ENCODE measurements at regions of chr3 and their contacts with region 1.

Region 1: DNA sequence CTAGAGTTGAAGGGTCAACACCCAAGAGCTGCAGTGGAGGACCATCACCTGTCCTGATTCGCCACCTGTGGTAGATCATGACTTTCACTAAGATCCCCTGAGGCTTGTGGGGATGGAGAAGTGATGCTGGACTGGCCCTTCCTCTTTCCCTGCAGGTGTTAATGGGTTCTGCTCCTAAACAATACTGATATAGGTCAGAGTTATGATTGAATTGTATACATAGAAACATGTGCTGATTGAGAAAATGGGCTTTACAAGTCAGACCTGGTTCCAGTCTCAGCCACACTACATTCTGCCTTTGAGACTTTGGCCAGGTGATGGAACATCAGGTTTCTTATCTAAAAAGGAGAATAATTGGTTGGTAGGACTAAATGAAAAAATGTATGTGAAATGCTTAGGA is 418.9 kb upstream of the TPRG1 start:
- DNase-seq: no peak
- H3K4me3 Mint-ChIP-seq: no peak overlapping the region
- H3K27ac Mint-ChIP-seq: peak overlapping the region; percentile 60
- H3K4me1 Mint-ChIP-seq: peaks cover 33% of the 10 kb centered on the region
- H3K27me3 Mint-ChIP-seq: peaks cover 2% of the 10 kb centered on the region

Region 2: DNA sequence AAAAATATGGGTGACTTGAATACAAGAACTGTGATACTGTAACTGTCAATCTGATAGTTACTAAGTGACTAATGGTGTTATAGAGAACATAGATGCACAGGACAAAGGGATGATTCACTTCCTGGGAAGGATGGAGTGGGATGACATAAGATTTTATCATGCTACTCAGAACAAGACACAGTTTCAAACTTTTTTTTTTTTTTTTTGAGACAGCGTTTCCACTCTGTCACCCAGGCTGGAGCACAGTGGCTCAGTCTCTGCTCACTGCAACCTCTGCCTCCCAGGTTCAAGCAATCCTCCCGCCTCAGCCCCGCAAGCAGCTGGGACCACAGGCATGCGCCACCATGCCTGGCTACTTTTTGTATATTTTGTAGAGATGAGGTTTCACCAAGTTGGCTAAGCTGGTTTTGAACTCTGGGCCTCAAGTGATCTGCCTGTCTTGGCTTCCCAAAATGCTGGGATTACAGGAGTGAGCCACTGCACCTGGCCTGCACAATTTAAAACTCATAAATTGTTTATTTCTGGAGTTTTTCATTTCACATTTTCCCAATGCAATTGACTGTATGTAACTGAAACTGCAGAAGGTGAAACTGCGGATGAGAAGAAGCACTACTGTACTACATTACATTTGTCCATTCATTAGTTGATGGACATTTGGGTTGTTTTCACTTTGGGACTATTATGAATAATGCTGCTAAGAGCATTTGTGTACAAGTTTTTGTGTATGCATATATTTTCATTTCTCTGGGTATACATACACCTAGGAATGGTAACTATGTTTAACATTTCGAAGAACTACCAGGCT is 1869.8 kb before region 1 on chr3:
- intact Hi-C with region 1: loop called (anchors 5 kb)
- DNase-seq: peak; percentile 31
- H3K4me3 Mint-ChIP-seq: peak overlapping the region; percentile 54
- H3K27ac Mint-ChIP-seq: peak overlapping the region; percentile 90
- H3K4me1 Mint-ChIP-seq: peaks cover 58% of the 10 kb centered on the region
- H3K27me3 Mint-ChIP-seq: no peaks in the 10 kb centered on the region

Region 3: GRCh38 chr3:187889601-187890404 is 863.0 kb before region 1 on chr3:
- intact Hi-C with region 1: no loop called
- DNase-seq: no peak
- H3K4me3 Mint-ChIP-seq: no peak overlapping the region
- H3K27ac Mint-ChIP-seq: peak overlapping the region; percentile 57
- H3K4me1 Mint-ChIP-seq: peaks cover 15% of the 10 kb centered on the region
- H3K27me3 Mint-ChIP-seq: no peaks in the 10 kb centered on the region

Region 4: DNA sequence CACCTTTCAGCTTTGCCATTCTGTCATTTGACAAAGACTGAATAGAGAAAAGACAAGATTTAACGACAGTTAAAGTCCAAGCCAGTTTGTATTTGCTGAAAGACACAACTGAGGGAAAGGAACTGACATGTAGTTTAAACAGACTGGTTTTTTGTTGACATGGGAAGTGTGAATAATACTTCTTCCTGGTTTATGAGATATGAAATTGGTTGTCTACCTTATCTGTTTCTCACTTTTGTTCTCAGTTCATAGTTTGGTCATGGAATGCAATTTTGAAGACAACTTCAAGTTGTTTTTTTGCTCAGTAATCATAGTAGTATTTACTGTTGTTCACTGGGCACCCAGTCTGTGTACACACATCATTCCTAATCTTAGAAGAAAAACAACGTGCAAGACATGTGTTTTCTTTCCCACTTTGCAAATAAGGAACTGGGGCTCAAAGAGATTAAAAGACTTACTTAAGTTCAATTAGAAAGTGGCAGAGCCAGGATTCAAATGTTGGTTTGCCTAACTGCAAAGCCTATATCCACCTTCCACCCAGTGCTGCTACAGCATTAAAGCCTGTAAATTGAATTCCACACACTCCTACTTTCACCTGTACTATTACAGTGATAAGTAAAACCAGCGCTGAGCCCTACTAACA is 495.3 kb before region 1 on chr3:
- intact Hi-C with region 1: loop called (anchors 2 kb)
- DNase-seq: no peak
- H3K4me3 Mint-ChIP-seq: no peak overlapping the region
- H3K27ac Mint-ChIP-seq: peak overlapping the region; percentile 63
- H3K4me1 Mint-ChIP-seq: peaks cover 62% of the 10 kb centered on the region
- H3K27me3 Mint-ChIP-seq: peaks cover 2% of the 10 kb centered on the region

Region 5: DNA sequence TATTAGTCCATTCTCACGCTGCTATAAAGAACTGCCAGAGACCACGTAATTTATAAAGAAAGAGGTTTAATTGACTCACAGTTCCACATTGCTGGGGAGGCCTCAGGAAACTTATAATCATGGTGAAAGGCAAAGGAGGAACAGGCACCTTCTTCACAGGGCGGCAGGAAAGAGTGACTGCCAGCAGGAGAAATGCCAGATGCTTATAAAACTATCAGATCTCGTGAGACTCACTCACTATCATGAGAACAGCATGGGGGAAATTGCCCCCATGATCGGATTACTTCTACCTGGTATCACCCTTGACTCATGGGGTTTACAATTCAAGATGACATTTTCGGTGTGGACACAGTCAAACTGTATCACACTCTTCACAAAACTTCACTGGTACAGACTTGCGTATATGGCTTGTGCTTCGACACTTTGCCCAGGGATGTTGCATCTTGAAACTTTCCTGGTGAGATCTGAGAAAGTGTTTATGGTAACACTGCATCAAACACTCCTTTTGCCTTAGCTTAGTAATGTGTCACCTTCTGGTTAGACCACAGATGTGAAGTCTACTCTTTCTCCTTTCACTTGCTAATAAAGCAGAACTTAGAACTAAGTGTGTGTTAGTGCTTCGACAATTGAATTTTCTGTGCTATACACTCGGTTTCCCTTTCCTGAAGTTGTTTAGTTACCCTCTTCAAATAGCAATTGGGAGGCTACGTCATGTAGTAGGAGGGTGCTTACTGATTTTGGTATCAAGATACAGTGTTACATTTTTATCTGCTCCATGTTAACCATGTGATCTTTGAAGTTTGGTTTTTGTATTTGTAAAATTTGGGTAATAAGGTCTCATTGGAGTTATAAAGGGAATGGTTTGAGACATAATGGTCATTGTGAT is 413.2 kb before region 1 on chr3:
- intact Hi-C with region 1: loop called (anchors 1 kb)
- DNase-seq: peak; percentile 39
- H3K4me3 Mint-ChIP-seq: peak overlapping the region; percentile 63
- H3K27ac Mint-ChIP-seq: peak overlapping the region; percentile 86
- H3K4me1 Mint-ChIP-seq: peaks cover 37% of the 10 kb centered on the region
- H3K27me3 Mint-ChIP-seq: peaks cover 24% of the 10 kb centered on the region

Region 6: GRCh38 chr3:188697127-188697526 is 55.7 kb before region 1 on chr3:
- intact Hi-C with region 1: loop called (anchors 1 kb)
- DNase-seq: no peak
- H3K4me3 Mint-ChIP-seq: no peak overlapping the region
- H3K27ac Mint-ChIP-seq: peak overlapping the region; percentile 18
- H3K4me1 Mint-ChIP-seq: peaks cover 36% of the 10 kb centered on the region
- H3K27me3 Mint-ChIP-seq: peaks cover 5% of the 10 kb centered on the region

Region 7: DNA sequence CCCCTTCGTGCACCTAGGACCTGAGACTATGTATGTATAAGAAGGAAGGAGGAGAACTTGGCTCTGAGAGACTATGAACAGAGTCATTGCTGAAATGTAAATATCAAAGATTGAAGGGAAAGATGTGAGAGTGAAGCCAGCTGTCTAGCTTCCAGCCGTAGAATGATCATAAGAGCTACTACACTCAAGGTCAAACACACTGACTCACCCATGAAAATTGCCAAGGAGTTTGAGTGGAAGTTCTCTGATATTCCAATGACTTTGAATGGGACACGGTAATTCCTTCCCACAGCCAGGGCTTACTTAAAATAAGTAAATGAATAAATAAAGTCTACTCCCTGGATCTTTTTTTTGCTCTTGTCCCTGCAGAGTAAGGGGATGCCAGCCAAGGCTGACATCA is 20.0 kb after region 1 on chr3:
- intact Hi-C with region 1: no loop called
- DNase-seq: no peak
- H3K4me3 Mint-ChIP-seq: no peak overlapping the region
- H3K27ac Mint-ChIP-seq: no peak overlapping the region
- H3K4me1 Mint-ChIP-seq: no peaks in the 10 kb centered on the region
- H3K27me3 Mint-ChIP-seq: no peaks in the 10 kb centered on the region

Region 8: DNA sequence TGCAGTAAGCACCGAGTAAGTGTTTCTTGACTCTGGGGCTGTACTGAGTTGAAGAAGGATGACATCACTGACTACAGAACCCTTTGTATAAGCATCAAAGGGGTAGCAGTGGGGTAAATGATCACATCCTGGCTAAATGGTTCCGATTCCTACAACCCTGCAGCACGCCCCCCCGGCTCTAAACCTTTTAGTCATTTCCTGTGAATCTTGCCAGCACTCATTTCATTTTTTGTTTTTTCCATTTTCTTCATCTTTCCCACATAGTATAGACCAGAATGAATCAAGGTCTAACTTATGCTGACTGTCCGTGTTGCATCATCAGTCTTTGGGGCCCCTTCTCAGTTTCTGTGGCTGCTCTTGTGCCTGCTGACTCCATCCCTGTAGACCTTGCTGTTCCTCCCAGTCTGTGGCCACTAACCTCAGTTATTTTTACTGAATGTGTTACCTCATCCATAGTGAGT is 35.8 kb after region 1 on chr3:
- intact Hi-C with region 1: loop called (anchors 1 kb)
- DNase-seq: peak; percentile 49
- H3K4me3 Mint-ChIP-seq: no peak overlapping the region
- H3K27ac Mint-ChIP-seq: no peak overlapping the region
- H3K4me1 Mint-ChIP-seq: peaks cover 6% of the 10 kb centered on the region
- H3K27me3 Mint-ChIP-seq: peaks cover 8% of the 10 kb centered on the region

Region 9: DNA sequence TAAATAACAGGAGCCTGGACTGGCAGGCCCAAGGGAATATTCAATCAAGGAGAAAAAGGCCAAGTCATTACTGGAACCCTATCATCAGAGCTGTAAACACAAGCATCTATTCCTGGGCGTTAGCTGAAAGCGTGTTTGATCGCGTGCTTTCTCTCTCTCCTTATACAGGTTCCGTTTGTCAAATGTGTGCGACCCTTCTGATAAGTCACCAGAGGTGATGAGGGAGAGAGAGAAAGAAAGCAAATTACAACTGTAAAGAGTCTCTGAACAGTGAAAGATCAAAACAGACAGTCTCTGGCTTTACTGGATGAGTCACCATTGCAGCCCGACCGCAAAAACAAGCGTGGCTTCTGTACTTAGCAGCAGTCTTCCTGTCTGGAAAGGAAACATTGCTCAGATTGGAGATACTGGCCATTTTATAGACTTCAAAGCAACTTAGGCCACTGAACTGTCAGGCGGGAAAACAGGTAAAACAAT is 379.4 kb after region 1 on chr3:
- intact Hi-C with region 1: loop called (anchors 1 kb)
- DNase-seq: peak; percentile 75
- H3K4me3 Mint-ChIP-seq: peak overlapping the region; percentile 69
- H3K27ac Mint-ChIP-seq: peak overlapping the region; percentile 76
- H3K4me1 Mint-ChIP-seq: peaks cover 28% of the 10 kb centered on the region
- H3K27me3 Mint-ChIP-seq: no peaks in the 10 kb centered on the region